ENCODE measurements at regions of chr7 and their contacts with region 1.

Region 1: GRCh38 chr7:131859147-131859821 is 302.9 kb upstream of the PODXL start:
- DNase-seq: peak; percentile 80
- H3K4me3 ChIP-seq: peak overlapping the region in 1 of 2 experiments; percentile 15; a peak in 1 of 4 replicates
- H3K27ac ChIP-seq: peak overlapping the region in 1 of 2 experiments; percentile 76; a peak in 3 of 4 replicates
- H3K4me1 ChIP-seq: peaks cover 7 to 30% of the 10 kb centered on the region in 2 experiments; a peak in 3 of 4 replicates
- H3K27me3 ChIP-seq: no peaks in the 10 kb centered on the region
- CTCF ChIP-seq: peak; percentile 99
- EP300 ChIP-seq: no peak
- RAD21 ChIP-seq: peak; percentile 86

Region 2: GRCh38 chr7:131688738-131689661 is 170.3 kb before region 1 on chr7:
- CTCF ChIA-PET with region 1: interaction called, 74 read pairs
- POLR2A ChIA-PET with region 1: no interaction called
- DNase-seq: peak; percentile 95
- H3K4me3 ChIP-seq: no peak overlapping the region; a peak in 1 of 4 replicates
- H3K27ac ChIP-seq: no peak overlapping the region
- H3K4me1 ChIP-seq: peaks cover 0 to 4% of the 10 kb centered on the region in 2 experiments; a peak in 1 of 4 replicates
- H3K27me3 ChIP-seq: no peaks in the 10 kb centered on the region
- CTCF ChIP-seq: peak; percentile 99
- EP300 ChIP-seq: no peak
- RAD21 ChIP-seq: peak; percentile 100

Region 3: DNA sequence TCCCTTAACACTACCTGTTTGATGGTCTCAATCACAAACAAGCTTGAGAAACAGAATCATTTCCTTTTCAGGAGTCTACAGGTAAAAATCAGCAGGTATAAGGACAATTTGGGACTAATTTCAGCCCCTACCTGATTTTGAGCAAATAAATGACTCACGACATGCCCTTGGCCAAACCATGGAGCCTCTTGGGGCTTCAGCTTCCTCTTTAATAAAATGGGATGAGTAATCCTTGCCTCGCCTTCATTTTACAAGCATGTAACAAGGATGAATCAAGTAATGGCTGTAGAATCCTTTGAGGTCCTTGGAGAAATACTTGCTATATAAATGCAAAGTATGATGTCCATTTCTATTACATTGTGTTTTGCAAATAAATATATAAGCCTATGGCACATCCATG is 90.1 kb before region 1 on chr7:
- CTCF ChIA-PET with region 1: interaction called, 10 read pairs
- POLR2A ChIA-PET with region 1: no interaction called
- DNase-seq: no peak
- H3K4me3 ChIP-seq: no peak overlapping the region
- H3K27ac ChIP-seq: no peak overlapping the region
- H3K4me1 ChIP-seq: no peaks in the 10 kb centered on the region
- H3K27me3 ChIP-seq: no peaks in the 10 kb centered on the region
- CTCF ChIP-seq: no peak
- EP300 ChIP-seq: no peak
- RAD21 ChIP-seq: no peak

Region 4: GRCh38 chr7:131836733-131837132 is 22.6 kb before region 1 on chr7:
- CTCF ChIA-PET with region 1: interaction called, 28 read pairs
- POLR2A ChIA-PET with region 1: no interaction called
- DNase-seq: no peak
- H3K4me3 ChIP-seq: no peak overlapping the region
- H3K27ac ChIP-seq: no peak overlapping the region
- H3K4me1 ChIP-seq: no peaks in the 10 kb centered on the region
- H3K27me3 ChIP-seq: no peaks in the 10 kb centered on the region; the same call in 1 of the 2 replicates
- CTCF ChIP-seq: no peak
- EP300 ChIP-seq: no peak
- RAD21 ChIP-seq: no peak

Region 5: DNA sequence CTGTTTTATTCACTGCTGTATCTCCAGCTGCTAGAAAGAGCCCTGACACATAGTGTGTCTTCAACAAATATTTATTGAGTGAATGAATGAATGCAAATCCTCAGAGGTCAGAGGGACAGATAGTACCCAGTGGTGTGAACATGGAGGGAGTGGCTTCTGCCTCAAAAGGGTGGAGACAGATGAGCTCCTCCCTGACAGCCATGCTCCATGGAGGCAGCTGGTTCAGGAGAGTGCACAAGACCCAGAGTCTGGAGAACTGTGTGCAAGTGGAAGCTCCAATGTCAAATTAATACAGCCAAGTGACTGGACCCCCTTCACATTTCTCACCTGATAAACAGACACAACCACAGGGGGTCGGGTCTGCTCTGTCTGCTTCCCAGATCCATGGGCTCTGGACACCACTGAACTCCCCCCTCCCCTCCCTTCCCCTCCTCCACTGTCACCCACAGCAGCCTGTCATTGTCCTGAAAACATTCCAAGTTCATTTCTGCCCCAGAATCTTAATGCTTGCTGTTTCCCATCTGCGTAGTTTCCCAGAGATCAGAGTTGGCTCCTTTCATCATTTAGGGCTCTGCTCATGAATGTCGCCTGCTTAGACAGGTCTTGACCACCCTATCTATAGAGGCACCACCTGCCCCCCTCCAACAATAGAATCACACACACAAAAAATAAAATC is 10.0 kb after region 1 on chr7:
- CTCF ChIA-PET with region 1: interaction called, 41 read pairs
- POLR2A ChIA-PET with region 1: no interaction called
- DNase-seq: no peak
- H3K4me3 ChIP-seq: no peak overlapping the region
- H3K27ac ChIP-seq: no peak overlapping the region
- H3K4me1 ChIP-seq: no peaks in the 10 kb centered on the region; a peak in 1 of 4 replicates
- H3K27me3 ChIP-seq: no peaks in the 10 kb centered on the region
- CTCF ChIP-seq: no peak
- EP300 ChIP-seq: no peak
- RAD21 ChIP-seq: no peak

Region 6: GRCh38 chr7:131890176-131890575 is 30.9 kb after region 1 on chr7:
- CTCF ChIA-PET with region 1: interaction called, 16 read pairs
- POLR2A ChIA-PET with region 1: no interaction called
- DNase-seq: no peak
- H3K4me3 ChIP-seq: no peak overlapping the region
- H3K27ac ChIP-seq: no peak overlapping the region
- H3K4me1 ChIP-seq: peaks cover 0 to 28% of the 10 kb centered on the region in 2 experiments; a peak in 3 of 4 replicates
- H3K27me3 ChIP-seq: no peaks in the 10 kb centered on the region
- CTCF ChIP-seq: no peak; the same call in 1 of the 2 replicates
- EP300 ChIP-seq: no peak
- RAD21 ChIP-seq: no peak

Region 7: GRCh38 chr7:132255898-132256297 is 396.6 kb after region 1 on chr7:
- CTCF ChIA-PET with region 1: interaction called, 14 read pairs
- POLR2A ChIA-PET with region 1: no interaction called
- DNase-seq: peak; percentile 63
- H3K4me3 ChIP-seq: no peak overlapping the region
- H3K27ac ChIP-seq: no peak overlapping the region; a peak in 1 of 4 replicates
- H3K4me1 ChIP-seq: peaks cover 0 to 22% of the 10 kb centered on the region in 2 experiments; a peak in 1 of 4 replicates
- H3K27me3 ChIP-seq: no peaks in the 10 kb centered on the region
- CTCF ChIP-seq: no peak
- EP300 ChIP-seq: peak in 1 of 2 experiments; percentile 37; a peak in 1 of 4 replicates
- RAD21 ChIP-seq: no peak

Measured in SK-N-SH (cell line).